Activated CD8-positive, alpha-beta memory T cell treated with anti-CD3 and anti-CD28 coated beads, Interleukin-2, amount 10 ng/mL, durations not matched to agents 7 days and 5 days (primary cell): ENCODE measurements at regions of chr19 and their contacts with region 1.

Region 1: DNA sequence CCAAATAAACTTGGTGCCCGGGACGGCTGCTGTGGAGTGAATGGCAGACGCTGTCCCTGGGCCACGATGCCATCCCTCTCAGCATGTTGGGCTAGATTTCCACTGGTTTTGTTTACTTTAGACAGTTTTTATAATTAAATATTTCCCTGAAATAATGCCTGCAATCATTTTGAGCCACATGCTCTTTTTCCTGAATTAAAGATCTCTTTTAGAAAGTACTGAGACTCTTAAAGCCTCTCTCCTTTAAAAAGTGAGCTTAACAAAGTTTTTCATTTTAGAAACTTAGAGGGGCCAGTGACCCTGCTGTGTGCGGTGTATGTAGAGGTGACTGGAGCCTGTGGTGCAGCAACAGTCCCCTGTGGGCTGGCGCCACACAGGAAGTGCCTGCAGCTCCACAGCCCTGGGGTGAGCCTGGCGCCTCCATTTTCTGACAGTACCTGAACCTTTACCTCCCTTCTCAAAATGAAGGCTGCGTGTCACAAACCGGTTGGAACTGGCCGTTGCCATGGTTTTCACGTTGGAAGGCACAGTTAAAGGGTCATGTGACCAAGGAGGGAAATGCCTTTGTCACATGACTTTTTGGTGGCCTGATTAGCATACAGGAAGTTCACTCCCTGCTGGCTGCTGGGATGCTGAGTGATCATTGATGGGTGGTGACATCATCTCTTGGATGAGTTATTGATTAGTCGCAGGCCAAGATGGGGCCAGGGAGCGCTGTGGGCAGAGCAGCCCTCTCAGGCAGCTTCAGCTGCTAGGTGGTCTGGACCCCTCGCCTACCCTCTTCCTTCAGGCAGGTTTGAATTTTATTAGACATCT is 26.3 kb downstream of the TSSK6 start:
- DNase-seq: peak; percentile 99
- ATAC-seq: peak; percentile 87
- H3K4me3 Mint-ChIP-seq: peak overlapping the region; percentile 43
- H3K27ac Mint-ChIP-seq: peak overlapping the region; percentile 95
- H3K4me1 Mint-ChIP-seq: peaks cover 44% of the 10 kb centered on the region
- H3K27me3 Mint-ChIP-seq: no peaks in the 10 kb centered on the region

Region 2: GRCh38 chr19:19361075-19361594 is 127.9 kb before region 1 on chr19:
- CTCF ChIA-PET with region 1: interaction called, 145 read pairs
- DNase-seq: peak; percentile 85
- ATAC-seq: peak; percentile 71
- H3K4me3 Mint-ChIP-seq: no peak overlapping the region
- H3K27ac Mint-ChIP-seq: no peak overlapping the region
- H3K4me1 Mint-ChIP-seq: peaks cover 33% of the 10 kb centered on the region
- H3K27me3 Mint-ChIP-seq: no peaks in the 10 kb centered on the region

Region 3: DNA sequence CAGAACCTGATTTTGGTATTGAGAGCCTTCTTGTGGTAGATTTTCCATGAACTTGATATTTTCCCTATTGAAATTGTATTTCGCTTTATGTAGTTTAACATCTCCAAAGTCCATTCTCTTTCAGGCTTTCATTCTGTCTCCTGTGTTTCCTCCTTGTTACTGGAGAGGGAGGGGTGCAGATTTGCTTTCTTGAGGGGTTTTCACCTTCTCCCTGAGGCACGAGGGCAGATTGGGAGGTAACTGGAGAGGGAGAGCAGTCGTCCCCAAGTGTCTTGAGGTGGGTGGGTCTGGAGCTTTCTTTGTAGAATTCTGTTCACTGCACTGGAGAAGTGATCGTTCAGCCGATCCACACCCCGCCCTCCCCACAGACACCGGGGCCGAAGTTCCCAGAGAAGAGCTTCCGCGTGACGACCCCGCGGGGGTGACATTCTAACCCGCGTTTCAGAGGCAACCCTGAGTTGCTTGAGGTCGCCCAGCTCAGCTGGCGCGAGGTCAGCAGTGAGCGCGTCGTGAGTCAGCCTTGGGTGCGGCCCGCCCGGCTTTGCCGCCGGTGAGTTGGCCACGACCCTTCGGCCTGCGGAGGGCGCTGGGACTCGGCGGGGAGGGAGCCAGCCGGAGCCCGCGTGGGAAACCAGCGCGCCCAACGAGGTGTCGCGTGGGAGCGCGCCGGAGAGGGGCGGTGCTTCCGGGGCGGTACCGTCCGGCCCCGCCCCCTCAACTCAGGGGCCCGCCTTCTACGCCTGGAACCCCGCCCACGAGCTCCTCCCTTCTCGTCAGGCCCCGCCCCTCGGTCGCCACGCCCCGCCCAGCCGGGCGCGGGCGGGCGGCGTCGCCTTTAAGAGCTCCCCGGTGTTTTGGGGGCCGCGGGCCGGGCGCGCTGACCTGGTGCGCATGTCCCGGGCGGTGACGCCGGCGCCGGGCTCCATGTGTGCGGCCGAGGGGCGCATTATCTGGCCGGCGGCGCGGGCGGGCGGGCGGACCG is 83.9 kb before region 1 on chr19 and contains the start of gene GATAD2A:
- CTCF ChIA-PET with region 1: interaction called, 62 read pairs
- DNase-seq: peak; percentile 92
- ATAC-seq: peak; percentile 83
- H3K4me3 Mint-ChIP-seq: peak within 1 kb of the TSS; percentile 91
- H3K27ac Mint-ChIP-seq: peak within 1 kb of the TSS; percentile 94
- H3K4me1 Mint-ChIP-seq: peaks cover 65% of the 10 kb centered on the region
- H3K27me3 Mint-ChIP-seq: no peaks in the 10 kb centered on the region
- total RNA-seq, gene GATAD2A: 159 to 161 TPM

Region 4: DNA sequence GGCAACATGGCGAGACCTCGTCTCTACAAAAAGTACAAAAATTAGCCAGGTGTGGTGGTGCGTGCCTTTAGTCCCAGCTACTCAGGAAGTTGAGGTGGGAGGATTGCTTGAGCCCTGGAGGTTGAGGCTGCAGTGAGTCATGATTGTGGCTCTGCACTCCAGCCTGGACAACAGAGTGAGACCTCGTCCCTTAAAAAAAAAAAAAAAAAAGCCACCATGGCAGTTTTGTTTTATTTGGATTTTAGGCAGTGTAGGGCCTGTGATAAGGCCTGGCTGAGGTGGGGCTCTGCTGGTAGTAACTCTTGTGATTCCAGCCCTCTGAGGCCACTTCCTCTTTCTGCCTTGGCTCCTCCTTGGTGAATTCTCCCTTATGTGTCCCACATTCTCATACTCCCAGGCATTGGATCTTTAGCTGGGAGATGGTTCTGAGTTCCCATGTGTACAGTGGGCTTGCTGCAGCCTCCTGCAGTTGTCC is 44.4 kb before region 1 on chr19:
- CTCF ChIA-PET with region 1: interaction called, 36 read pairs
- DNase-seq: peak; percentile 68
- ATAC-seq: peak; percentile 50
- H3K4me3 Mint-ChIP-seq: peak overlapping the region; percentile 28
- H3K27ac Mint-ChIP-seq: peak overlapping the region; percentile 86
- H3K4me1 Mint-ChIP-seq: peaks cover 64% of the 10 kb centered on the region
- H3K27me3 Mint-ChIP-seq: no peaks in the 10 kb centered on the region

Region 5: DNA sequence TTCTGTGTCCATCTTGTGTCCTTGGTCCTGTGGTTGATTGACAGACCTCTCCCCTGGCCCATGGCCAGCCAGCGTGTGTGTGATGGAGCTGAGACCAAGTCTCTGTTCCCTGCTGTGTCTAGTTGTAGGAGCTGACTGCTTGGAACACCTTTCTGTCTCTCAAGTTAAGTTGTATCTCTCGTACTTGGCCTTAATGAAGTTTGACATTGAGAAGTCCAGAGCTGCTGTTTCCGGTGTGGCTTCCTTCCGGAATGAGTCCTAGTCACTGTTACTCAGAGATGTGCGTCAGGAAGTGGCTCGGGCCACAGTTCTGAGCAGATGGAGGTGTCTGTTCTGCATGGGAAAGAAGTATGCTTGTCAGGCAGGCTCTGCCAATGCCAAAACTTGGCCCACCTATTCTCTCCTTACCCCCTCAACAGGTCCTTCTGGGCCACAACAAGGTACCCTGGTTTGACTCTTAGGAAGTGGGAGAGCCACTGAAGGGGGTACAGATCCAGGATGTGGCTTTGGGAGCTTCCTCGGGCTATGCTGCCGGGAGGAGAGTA is 29.3 kb before region 1 on chr19:
- CTCF ChIA-PET with region 1: interaction called, 24 read pairs
- DNase-seq: peak; percentile 89
- ATAC-seq: peak; percentile 73
- H3K4me3 Mint-ChIP-seq: peak overlapping the region; percentile 68
- H3K27ac Mint-ChIP-seq: peak overlapping the region; percentile 90
- H3K4me1 Mint-ChIP-seq: peaks cover 73% of the 10 kb centered on the region
- H3K27me3 Mint-ChIP-seq: no peaks in the 10 kb centered on the region

Region 6: DNA sequence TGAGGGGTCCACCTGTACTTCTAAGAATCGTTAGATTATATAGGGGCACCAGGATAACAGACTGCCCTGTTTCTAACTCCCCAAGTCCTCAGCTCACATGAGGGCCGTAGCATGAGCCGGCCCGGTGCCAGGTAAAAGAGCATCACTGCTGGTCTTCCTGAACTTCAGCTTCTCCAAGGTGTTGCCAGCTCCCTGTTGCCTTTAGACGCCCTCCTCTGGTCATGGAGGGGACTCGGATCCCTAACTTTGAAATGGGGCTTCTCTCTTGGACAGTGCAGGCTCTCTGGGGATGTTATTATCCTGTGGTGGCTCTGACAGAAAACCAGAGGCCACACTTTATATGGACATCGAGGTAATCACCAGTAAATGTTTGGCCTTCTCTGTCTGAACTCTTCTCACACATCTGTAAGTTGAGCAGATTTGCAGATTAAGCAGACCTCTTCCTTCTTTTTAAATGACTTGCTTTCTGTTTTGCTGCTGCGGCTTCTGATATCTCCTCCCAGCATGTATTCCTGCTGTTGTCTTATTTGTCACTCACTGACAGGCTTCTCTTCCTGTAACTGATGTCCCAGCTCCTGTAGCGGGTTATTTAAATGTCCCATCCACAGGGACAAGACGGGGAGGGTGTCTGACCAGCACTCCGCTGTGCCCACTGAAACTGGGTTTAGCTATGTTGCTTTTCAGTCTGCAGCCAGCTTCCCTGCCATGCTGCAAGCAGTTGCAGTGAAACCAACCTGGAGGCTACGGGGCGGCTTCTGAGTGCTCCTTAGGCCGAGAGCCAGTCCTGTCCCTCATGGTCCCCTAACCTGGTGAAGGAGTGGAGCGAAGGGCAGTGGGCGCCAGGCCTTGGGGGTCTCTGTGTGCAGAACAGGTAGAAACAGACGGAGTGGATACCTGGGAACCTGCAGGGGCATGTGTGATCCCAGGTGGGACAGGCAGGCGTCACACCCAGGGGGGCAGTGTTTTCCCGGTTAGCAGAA is 12.9 kb before region 1 on chr19:
- CTCF ChIA-PET with region 1: interaction called, 11 read pairs
- DNase-seq: no peak
- ATAC-seq: no peak
- H3K4me3 Mint-ChIP-seq: no peak overlapping the region
- H3K27ac Mint-ChIP-seq: peak overlapping the region; percentile 60
- H3K4me1 Mint-ChIP-seq: peaks cover 81% of the 10 kb centered on the region
- H3K27me3 Mint-ChIP-seq: no peaks in the 10 kb centered on the region

Region 7: DNA sequence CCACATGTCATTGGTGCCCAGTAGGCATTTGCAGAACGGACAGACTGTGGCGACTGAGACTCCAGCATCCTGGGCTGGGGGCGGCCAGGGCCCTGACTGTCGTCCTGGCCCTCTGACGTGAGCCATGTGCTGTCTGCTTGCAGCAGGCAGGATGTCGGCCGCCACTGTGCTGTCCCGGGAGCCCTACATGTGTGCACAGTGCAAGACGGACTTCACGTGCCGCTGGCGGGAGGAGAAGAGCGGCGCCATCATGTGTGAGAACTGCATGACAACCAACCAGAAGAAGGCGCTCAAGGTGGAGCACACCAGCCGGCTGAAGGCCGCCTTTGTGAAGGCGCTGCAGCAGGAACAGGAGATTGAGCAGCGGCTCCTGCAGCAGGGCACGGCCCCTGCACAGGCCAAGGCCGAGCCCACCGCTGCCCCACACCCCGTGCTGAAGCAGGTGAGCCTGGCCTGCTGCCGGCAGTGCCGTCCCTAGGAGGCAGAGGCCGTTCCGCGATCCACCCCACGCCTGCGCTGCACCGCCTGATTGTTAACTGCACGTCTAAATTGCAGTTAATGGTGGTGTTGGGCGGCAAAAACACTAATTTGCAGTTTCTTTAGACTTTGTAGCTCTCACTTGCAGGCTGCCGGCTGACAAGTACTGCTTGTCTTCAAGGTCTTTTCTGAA is 12.0 kb after region 1 on chr19:
- CTCF ChIA-PET with region 1: no interaction called
- DNase-seq: no peak
- ATAC-seq: no peak
- H3K4me3 Mint-ChIP-seq: no peak overlapping the region
- H3K27ac Mint-ChIP-seq: no peak overlapping the region
- H3K4me1 Mint-ChIP-seq: peaks cover 2% of the 10 kb centered on the region
- H3K27me3 Mint-ChIP-seq: no peaks in the 10 kb centered on the region

Region 8: DNA sequence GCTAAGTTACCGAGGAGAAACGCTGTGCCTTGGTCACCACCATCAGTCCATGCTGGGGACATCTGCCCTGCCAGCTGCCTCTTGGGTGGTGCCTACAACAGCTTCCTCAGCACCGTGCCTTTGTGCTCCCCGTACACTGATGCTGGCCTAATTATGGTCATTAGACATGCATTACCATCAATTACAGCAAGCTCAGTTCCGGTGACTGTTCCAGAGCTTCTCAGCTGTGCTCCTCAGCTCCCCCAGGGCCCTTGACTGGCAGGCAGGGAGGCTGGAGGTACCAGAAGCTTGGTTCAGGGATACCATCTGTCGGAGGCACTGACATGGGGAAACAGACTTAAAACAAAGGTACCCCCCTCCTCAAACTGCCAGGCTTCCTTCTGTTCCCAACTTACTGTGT is 89.2 kb after region 1 on chr19:
- CTCF ChIA-PET with region 1: no interaction called
- DNase-seq: no peak
- ATAC-seq: no peak
- H3K4me3 Mint-ChIP-seq: no peak overlapping the region
- H3K27ac Mint-ChIP-seq: no peak overlapping the region
- H3K4me1 Mint-ChIP-seq: peaks cover 17% of the 10 kb centered on the region
- H3K27me3 Mint-ChIP-seq: no peaks in the 10 kb centered on the region